Activated CD4-positive, alpha-beta T cell treated with anti-CD3 and anti-CD28 coated beads, Interleukin-2, amount 10 ng/mL, durations not matched to agents 24 days and 14 days (primary cell): ENCODE measurements at regions of chr2 and their contacts with region 1.

Region 1: GRCh38 chr2:54570925-54571694 is 115.0 kb downstream of the SPTBN1 start:
- DNase-seq: peak; percentile 95
- H3K4me3 Mint-ChIP-seq: peak overlapping the region; percentile 79
- H3K27ac Mint-ChIP-seq: peak overlapping the region; percentile 96
- H3K4me1 Mint-ChIP-seq: peaks cover 78% of the 10 kb centered on the region
- H3K27me3 Mint-ChIP-seq: no peaks in the 10 kb centered on the region

Region 2: DNA sequence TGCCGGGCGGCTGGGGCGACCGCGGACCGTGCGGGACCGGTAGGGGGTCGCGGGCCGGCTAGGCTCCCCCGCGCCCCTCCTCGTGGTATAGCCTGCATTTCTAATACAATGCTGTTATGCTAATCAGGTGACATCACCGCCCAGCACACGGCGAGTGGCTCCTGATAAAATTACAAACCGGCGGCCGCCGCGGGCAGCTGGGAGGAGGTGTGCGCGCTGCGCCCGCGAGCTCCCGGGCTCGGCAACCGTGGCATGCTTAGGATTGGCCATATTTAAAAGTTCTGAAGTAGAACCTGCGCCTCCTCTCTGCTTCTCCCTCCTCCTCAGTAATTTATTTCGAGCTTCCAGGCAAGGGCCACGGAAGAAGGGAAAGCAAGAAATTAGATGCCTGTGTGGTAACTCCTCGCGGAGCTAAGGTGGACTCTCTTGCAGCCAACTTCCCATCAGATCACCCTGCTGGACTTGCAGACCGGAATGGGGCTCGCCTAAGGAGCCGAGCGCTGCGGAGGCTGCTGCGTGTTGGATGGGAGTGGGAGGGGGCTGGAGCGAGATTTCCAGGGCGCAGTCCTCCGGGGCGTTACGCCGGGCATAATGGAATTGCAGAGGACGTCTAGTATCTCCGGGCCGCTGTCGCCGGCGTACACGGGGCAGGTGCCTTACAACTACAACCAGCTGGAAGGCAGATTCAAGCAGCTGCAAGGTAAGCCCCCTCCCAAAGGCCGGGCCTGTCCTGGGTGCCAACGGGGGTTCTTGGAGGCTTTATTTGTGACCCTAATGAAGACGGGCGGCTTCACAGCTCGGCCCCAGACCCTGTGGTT is 12.7 kb before region 1 on chr2:
- intact Hi-C with region 1: loop called (anchors 1 kb)
- DNase-seq: peak; percentile 91
- H3K4me3 Mint-ChIP-seq: peak overlapping the region; percentile 95
- H3K27ac Mint-ChIP-seq: peak overlapping the region; percentile 95
- H3K4me1 Mint-ChIP-seq: peaks cover 55% of the 10 kb centered on the region
- H3K27me3 Mint-ChIP-seq: no peaks in the 10 kb centered on the region

Region 3: DNA sequence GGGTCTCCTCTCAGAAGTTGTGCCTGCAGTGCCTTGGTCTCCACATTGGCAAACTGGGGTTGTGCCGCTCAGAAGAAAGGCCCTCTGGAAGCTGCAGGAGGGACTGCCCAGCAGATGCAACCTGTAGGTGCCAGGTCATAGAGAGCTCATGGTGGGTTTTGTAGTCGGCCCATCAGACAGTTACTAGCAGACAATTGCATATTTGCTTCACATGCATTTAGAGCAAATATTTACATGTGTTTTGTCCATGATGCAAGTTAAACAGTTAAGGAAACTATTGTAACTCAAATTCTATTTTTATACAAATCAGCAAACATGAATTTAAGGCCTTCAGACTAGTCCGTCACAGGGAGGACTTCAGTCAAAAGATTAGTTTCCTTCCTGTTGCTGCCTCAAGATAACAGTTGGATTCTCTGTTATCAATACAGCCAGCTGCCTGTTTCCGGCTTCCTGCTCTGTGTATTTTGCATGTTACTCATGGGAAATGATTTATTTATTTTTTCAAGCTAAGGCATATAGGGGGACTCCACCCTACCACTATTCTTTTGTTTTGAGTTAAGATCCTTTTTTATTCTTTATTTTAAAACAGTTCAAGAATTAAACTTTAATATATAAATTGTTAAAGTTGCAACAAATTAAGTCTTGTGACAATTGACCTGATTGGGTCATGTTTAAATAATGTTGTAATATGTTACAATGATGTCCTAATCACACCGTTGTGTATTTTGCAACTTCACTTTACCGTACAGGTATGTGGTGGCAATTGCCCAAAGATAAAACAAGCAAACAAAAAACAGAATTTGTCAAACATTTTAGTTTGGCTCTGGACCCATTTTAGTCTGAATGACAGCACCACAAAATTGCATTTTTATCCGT is 18.5 kb after region 1 on chr2:
- intact Hi-C with region 1: loop called (anchors 2 kb)
- DNase-seq: peak; percentile 83
- H3K4me3 Mint-ChIP-seq: peak overlapping the region; percentile 67
- H3K27ac Mint-ChIP-seq: peak overlapping the region; percentile 85
- H3K4me1 Mint-ChIP-seq: peaks cover 66% of the 10 kb centered on the region
- H3K27me3 Mint-ChIP-seq: no peaks in the 10 kb centered on the region

Region 4: GRCh38 chr2:54606393-54606969 is 35.4 kb after region 1 on chr2:
- intact Hi-C with region 1: loop called (anchors 1 kb)
- DNase-seq: peak; percentile 82
- H3K4me3 Mint-ChIP-seq: peak overlapping the region; percentile 69
- H3K27ac Mint-ChIP-seq: peak overlapping the region; percentile 84
- H3K4me1 Mint-ChIP-seq: peaks cover 77% of the 10 kb centered on the region
- H3K27me3 Mint-ChIP-seq: no peaks in the 10 kb centered on the region

Region 5: GRCh38 chr2:54680397-54681041 is 109.4 kb after region 1 on chr2:
- intact Hi-C with region 1: loop called (anchors 1 kb)
- DNase-seq: peak; percentile 80
- H3K4me3 Mint-ChIP-seq: peak overlapping the region; percentile 77
- H3K27ac Mint-ChIP-seq: peak overlapping the region; percentile 63
- H3K4me1 Mint-ChIP-seq: peaks cover 49% of the 10 kb centered on the region
- H3K27me3 Mint-ChIP-seq: peaks cover 47% of the 10 kb centered on the region

Region 6: GRCh38 chr2:55223958-55224760 is 653.0 kb after region 1 on chr2:
- intact Hi-C with region 1: loop called (anchors 5 kb)
- DNase-seq: no peak
- H3K4me3 Mint-ChIP-seq: peak overlapping the region; percentile 75
- H3K27ac Mint-ChIP-seq: peak overlapping the region; percentile 85
- H3K4me1 Mint-ChIP-seq: peaks cover 36% of the 10 kb centered on the region
- H3K27me3 Mint-ChIP-seq: no peaks in the 10 kb centered on the region